ENCODE measurements at regions of chr3 and their contacts with region 1.

Region 1: GRCh38 chr3:191627064-191627463 is 166.1 kb downstream of the PYDC2 start:
- DNase-seq: no peak
- ATAC-seq: no peak
- H3K4me3 ChIP-seq: no peak overlapping the region
- H3K27ac ChIP-seq: no peak overlapping the region
- H3K4me1 ChIP-seq: no peaks in the 10 kb centered on the region
- H3K27me3 ChIP-seq: peaks cover 0 to 5% (median 0%) of the 10 kb centered on the region in 7 donors
- CTCF ChIP-seq: no peak

Region 2: DNA sequence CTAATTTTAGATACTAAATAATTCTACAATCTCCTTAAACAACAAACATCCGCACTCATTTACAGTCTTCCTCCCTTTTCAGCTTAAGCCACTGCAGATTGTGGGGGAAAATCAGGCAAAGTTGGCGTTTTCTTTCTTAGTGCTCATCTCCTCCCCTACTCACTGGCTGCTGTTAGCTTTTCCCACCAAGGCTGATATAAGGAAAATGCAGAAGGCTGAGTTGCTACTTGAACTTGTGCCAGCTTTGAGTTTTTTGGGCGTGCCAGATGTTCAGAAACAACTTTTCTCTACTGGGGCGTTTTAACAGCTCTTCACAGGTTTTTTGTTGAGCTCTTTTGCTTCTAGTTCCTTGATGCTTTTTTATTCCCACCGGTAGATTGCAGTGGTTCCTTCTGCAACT is 55.9 kb after region 1 on chr3:
- intact Hi-C with region 1: loop called in 1 of 10 experiments (anchors 10 kb)
- DNase-seq: no peak
- ATAC-seq: no peak
- H3K4me3 ChIP-seq: no peak overlapping the region
- H3K27ac ChIP-seq: no peak overlapping the region
- H3K4me1 ChIP-seq: peaks cover 0 to 7% (median 0%) of the 10 kb centered on the region in 9 donors
- H3K27me3 ChIP-seq: no peaks in the 10 kb centered on the region
- CTCF ChIP-seq: no peak

Region 3: DNA sequence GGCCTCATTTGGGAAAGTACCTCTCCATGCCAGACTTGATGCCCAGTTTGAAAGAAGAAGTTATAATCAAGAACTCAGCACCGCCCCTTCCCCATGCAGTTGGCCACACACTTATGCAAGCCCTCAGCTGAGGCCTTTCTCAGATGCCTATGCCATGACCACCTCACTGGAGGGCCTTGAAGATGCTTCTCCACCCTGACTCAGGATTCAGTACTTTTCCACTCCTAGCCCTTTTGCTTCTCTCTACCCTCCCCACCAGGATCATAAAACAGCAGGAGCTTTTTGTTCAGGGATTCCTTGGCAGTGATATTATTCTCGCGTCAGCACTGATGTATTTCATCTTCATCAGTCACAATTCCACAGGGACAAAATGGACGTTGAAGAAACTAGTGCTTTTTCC is 147.4 kb after region 1 on chr3:
- intact Hi-C with region 1: no loop called
- DNase-seq: no peak
- ATAC-seq: no peak
- H3K4me3 ChIP-seq: no peak overlapping the region
- H3K27ac ChIP-seq: no peak overlapping the region
- H3K4me1 ChIP-seq: no peaks in the 10 kb centered on the region
- H3K27me3 ChIP-seq: no peaks in the 10 kb centered on the region
- CTCF ChIP-seq: no peak